ENCODE measurements at regions of chr16 and their contacts with region 1.

Region 1: GRCh38 chr16:53022374-53022773 is 30.3 kb downstream of the CHD9NB start:
- DNase-seq: peak; percentile 70
- H3K4me3 ChIP-seq: no peak overlapping the region
- H3K27ac ChIP-seq: no peak overlapping the region
- H3K4me1 ChIP-seq: no peaks in the 10 kb centered on the region
- H3K27me3 ChIP-seq: no peaks in the 10 kb centered on the region
- CTCF ChIP-seq: peak; percentile 74
- EP300 ChIP-seq: no peak
- RAD21 ChIP-seq: peak; percentile 95

Region 2: DNA sequence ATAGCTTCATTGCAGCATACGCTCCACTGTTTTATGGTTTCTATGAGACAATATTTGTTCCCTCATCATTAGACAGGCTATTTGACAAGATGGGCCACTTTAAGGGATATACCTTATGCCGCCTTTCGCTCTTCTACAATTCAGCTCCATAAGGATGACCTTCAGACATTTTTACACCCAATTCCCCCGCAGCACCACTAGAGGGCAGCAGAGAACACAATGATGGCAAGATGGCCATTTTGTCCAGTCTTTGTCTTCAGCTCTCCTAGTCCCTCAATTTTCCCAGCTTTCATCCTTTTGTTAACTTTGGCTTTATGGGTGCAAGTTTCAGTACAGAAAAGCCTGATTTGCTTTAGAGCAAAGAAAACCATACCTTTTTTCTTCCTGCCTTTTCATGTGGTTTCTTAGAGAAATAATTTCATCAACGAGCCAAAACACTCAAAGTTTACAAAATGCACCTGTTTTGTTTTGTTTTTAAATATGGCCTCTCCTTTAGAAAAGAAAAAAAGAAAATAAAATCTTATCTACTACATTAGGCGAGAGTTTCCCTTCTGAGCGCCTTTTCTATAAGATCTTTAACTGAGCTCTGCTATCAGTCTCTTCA is 830.7 kb before region 1 on chr16:
- CTCF ChIA-PET with region 1: interaction called, 75 read pairs
- POLR2A ChIA-PET with region 1: no interaction called
- DNase-seq: peak; percentile 46
- H3K4me3 ChIP-seq: peak overlapping the region in 1 of 2 experiments; percentile 37; a peak in 1 of 4 replicates
- H3K27ac ChIP-seq: no peak overlapping the region
- H3K4me1 ChIP-seq: no peaks in the 10 kb centered on the region; a peak in 1 of 4 replicates
- H3K27me3 ChIP-seq: no peaks in the 10 kb centered on the region
- CTCF ChIP-seq: peak; percentile 87
- EP300 ChIP-seq: no peak
- RAD21 ChIP-seq: peak; percentile 90

Region 3: DNA sequence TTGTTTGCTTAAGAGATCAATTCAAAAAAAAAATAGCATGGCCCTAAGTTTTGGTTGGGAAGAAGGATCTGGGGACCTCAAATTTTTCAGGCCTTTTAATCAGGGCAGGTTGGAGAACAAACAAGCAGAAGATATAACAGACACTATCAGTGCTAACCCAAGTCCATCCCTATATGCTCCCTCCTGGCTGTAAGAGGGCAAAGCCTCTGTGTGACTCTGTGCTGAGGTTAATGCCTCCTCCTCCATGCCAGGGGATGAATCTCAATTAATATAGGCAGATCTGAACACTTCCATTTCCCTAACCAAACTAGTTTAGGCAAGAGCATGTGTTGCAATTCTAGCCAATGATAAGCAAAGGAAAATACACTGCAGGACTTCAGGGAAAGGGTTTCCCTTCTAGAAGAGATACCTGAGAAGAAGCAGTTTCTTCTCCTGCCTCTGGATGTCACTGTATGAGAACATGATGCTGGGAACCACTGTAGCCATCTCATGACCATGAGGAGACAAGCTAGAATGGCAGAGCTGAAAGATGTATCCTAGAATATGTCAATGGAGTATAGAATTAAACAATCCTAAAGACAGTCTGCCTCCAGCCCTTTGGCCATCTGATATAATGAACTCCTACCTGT is 45.7 kb before region 1 on chr16:
- CTCF ChIA-PET with region 1: interaction called, 16 read pairs
- POLR2A ChIA-PET with region 1: no interaction called
- DNase-seq: peak; percentile 14
- H3K4me3 ChIP-seq: no peak overlapping the region
- H3K27ac ChIP-seq: no peak overlapping the region
- H3K4me1 ChIP-seq: no peaks in the 10 kb centered on the region
- H3K27me3 ChIP-seq: no peaks in the 10 kb centered on the region
- CTCF ChIP-seq: peak; percentile 41
- EP300 ChIP-seq: no peak
- RAD21 ChIP-seq: peak; percentile 55

Region 4: GRCh38 chr16:53035176-53035942 is 13.0 kb after region 1 on chr16:
- CTCF ChIA-PET with region 1: interaction called, 10 read pairs
- POLR2A ChIA-PET with region 1: no interaction called
- DNase-seq: no peak
- H3K4me3 ChIP-seq: no peak overlapping the region
- H3K27ac ChIP-seq: no peak overlapping the region
- H3K4me1 ChIP-seq: no peaks in the 10 kb centered on the region
- H3K27me3 ChIP-seq: no peaks in the 10 kb centered on the region
- CTCF ChIP-seq: no peak
- EP300 ChIP-seq: no peak
- RAD21 ChIP-seq: no peak

Measured in SK-N-SH (cell line).